Heart right ventricle (tissue), 16 donors: ENCODE measurements at regions of chr16 and their contacts with region 1.

Region 1: DNA sequence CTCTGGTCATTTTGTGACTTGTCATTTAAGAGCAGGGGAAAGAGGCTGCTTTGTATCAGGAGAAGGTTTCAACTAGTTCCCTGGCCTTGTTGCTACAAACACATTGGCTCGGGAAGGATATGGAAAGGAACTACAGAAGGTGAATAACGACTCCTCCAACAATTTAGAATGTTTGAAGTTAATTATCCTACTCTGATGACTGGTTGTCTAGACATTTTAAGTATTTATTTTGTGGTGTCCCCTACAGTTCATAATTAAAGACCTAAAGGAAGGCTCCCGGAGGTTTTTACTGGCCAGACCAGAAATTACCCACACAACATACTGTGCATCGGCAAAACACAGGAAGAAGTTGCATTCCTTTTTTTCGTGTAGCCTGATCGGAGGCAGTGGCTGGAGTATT is 515.8 kb upstream of the SALL1 start:
- DNase-seq: no peak
- ATAC-seq: no peak
- H3K4me3 ChIP-seq: no peak overlapping the region
- H3K27ac ChIP-seq: no peak overlapping the region
- H3K4me1 ChIP-seq: no peaks in the 10 kb centered on the region
- H3K27me3 ChIP-seq: peaks cover 0 to 5% (median 0%) of the 10 kb centered on the region in 7 donors
- CTCF ChIP-seq: no peak

Region 2: DNA sequence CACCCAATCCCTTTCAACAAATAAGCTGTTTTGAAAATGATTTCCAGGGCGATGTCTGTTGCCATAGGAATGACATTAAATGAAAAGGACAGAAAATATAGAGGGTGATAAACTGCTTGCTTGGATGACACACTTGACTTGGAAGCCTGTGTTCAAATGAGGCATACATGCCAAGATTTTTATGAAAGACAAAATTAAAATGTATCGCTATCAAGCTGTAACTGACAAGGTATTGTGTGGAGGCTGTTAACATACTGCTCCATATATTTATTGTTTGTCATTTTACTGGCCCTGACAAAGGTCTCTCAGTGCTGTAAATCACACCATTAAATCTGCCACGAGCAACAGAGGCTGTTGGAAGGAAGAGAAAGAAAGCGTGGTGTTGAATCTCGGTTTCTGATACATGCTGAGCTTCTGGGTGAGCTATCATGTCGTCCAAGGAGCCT is 59.6 kb before region 1 on chr16:
- intact Hi-C with region 1: loop called in 1 of 10 experiments (anchors 10 kb)
- DNase-seq: no peak
- ATAC-seq: no peak
- H3K4me3 ChIP-seq: no peak overlapping the region
- H3K27ac ChIP-seq: no peak overlapping the region
- H3K4me1 ChIP-seq: no peaks in the 10 kb centered on the region
- H3K27me3 ChIP-seq: no peaks in the 10 kb centered on the region
- CTCF ChIP-seq: no peak

Region 3: GRCh38 chr16:51818342-51818944 is 151.6 kb after region 1 on chr16:
- intact Hi-C with region 1: no loop called
- DNase-seq: peak in 1 of 2 donors; percentile 7
- ATAC-seq: no peak
- H3K4me3 ChIP-seq: no peak overlapping the region
- H3K27ac ChIP-seq: no peak overlapping the region
- H3K4me1 ChIP-seq: no peaks in the 10 kb centered on the region
- H3K27me3 ChIP-seq: no peaks in the 10 kb centered on the region
- CTCF ChIP-seq: peak in 8 of 9 donors; percentile 22 to 60 (median 52)